PC-9 (cell line): ENCODE measurements at regions of chr4 and their contacts with region 1.

Region 1: DNA sequence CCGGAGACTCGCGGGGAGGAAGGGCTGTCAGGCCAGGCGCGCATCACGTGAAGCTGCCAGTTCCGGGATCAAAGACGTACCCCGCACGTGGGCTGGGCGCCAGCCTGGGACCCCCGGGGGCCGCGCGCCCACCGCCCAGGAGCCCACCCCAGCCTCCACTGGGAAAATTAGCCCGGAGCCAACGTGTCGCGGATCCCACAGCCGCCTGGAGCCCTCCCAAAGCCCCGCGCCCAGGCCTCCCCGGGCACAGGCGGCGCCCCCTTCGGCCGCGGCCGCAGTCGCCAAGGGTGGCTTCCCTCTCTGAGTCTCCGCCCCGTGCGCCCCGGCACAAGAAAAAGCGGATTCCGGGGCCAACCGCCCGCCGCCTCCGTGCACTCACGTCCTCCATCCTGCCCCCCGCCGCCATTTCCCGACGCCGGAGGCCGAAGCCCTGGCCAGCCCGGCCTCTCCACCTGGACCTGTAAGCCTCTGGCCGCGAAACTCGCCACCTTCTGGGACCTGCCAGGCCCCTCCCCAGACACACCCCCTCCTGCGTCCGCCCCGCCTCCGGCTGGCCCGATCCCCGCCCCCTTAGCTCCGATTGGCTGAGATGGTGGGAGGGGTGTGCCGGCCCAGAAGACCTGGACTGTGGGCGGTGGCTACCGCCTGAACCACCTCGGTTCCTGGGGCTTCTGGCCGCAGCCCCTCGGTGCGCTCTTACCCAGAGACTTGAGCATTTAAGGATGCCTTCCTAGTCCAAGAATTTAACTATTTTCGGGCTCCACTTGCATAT is at the start of gene TMEM192:
- DNase-seq: peak; percentile 69 to 95
- H3K4me3 ChIP-seq: peak within 1 kb of the TSS; percentile 80
- H3K27ac ChIP-seq: peak within 1 kb of the TSS; percentile 65
- H3K4me1 ChIP-seq: 0 out of 2 replicates have a peak, but pooled peaks cover 3% of the 10 kb centered on the region
- H3K27me3 ChIP-seq: no peaks in the 10 kb centered on the region
- CTCF ChIP-seq: no peak
- total RNA-seq, gene TMEM192: 11.5 and 16.8 TPM in 2 replicates

Region 2: GRCh38 chr4:165085946-165086345 is 26.6 kb before region 1 on chr4:
- CTCF ChIA-PET with region 1: no interaction called
- POLR2A ChIA-PET with region 1: interaction called, 10 read pairs
- intact Hi-C with region 1: no loop called
- DNase-seq: no peak
- H3K4me3 ChIP-seq: no peak overlapping the region
- H3K27ac ChIP-seq: no peak overlapping the region
- H3K4me1 ChIP-seq: no peaks in the 10 kb centered on the region
- H3K27me3 ChIP-seq: no peaks in the 10 kb centered on the region
- CTCF ChIP-seq: no peak

Region 3: DNA sequence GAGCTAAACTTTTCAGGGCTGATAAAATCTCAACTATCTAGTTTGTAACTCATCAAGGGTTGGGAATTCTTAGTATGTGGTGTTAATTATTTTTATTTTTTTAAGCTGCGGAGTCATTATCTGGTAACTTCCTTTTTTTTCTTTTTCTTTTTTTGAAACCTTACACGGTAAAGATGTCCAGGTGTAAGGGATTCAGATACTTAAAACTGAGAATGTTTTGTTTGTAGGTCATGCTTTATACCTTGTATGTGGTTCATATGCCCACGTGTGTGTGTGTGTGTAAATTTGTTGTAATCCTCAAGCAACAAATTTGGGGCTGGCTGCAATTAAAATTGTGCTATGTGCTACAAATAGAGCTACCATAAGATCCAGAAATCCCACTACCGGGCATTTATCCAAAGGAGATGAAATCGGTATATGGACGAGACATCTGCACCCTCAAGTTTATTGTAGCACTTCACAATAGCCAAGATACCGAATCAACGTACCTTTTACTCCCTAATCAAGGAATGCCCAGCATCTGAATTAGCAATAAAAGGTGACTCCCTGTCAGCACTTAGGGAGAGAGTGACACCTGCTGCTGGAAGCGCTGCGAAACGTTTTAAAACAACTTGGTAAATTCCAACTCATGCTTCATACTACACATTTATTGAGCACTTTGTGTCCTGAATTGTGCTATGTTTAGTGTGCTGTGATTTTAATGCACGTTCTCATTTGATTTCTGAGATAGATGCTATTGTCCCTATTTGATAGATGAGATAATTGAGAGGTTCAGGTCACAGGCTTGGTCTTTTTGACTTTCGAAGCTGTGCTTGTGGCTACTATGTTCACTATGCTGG is 231.0 kb after region 1 on chr4:
- CTCF ChIA-PET with region 1: no interaction called
- POLR2A ChIA-PET with region 1: no interaction called
- intact Hi-C with region 1: loop called (anchors 5 kb)
- DNase-seq: no peak
- H3K4me3 ChIP-seq: no peak overlapping the region
- H3K27ac ChIP-seq: no peak overlapping the region
- H3K4me1 ChIP-seq: no peaks in the 10 kb centered on the region
- H3K27me3 ChIP-seq: no peaks in the 10 kb centered on the region
- CTCF ChIP-seq: peak; percentile 49; the same call in 1 of the 2 replicates

Region 4: DNA sequence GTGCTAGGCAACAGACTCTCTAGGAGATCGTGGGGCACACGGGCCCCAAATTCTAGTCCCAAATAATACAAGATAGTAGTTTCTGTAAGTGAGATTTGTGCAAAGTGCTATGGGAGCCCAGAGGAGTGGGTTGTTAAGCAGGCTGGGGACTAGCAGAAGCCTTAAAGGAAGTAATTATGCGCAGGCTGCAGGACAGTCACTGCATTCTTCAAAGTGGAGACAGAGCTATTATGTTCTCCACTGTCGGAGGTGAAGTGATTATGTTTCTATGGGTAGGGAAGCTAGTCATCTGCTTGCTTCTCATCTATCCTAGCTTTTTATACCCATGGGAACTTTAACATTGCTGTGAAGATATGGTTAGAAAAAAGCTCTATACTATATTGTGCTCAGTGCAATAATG is 420.4 kb after region 1 on chr4:
- CTCF ChIA-PET with region 1: no interaction called
- POLR2A ChIA-PET with region 1: no interaction called
- intact Hi-C with region 1: no loop called
- DNase-seq: no peak
- H3K4me3 ChIP-seq: no peak overlapping the region
- H3K27ac ChIP-seq: no peak overlapping the region
- H3K4me1 ChIP-seq: no peaks in the 10 kb centered on the region
- H3K27me3 ChIP-seq: no peaks in the 10 kb centered on the region
- CTCF ChIP-seq: no peak